Adrenal gland (tissue), 19 donors: ENCODE measurements at regions of chr11 and their contacts with region 1.

Region 1: DNA sequence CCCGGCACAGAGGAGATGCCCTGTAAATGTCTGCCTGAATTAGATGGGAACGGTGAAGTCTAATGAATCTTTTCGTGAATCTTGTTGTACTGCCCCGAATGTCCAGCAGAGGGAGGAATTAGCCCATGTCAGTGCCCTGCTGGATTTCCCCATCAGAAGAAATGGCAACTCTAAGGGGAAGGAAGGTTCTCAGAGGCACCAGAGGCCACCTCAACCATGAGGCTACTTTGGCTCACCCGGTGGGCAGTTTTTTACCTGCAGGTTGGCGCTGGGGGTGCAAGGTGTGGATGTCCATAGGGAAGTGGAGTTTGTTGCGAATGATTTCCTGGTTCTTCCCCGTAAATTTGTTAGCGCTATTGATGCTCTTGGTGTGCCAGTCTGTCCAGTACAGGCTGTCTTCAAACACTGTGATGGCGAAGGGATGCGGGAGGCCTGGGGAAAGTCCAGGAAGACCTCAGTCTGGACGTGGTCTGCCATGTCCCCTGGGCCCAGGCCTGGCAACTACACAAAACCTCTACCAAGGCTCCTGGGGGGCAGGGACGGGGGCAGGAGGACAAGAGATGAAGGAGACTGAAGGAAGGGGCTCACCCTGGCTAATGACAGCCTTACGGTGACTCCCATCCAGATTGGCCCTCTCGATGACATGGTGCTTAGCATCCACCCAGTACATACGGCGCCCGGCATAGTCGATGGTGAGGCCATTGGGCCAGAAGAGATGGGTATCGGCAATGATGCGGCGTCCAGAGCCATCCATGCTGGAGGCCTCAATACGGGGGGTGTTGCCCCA is 28.5 kb downstream of the LRP4 start:
- DNase-seq: peak; percentile 66 to 92 (median 80)
- H3K4me3 ChIP-seq: no peak overlapping the region
- H3K27ac ChIP-seq: no peak overlapping the region
- H3K4me1 ChIP-seq: no peaks in the 10 kb centered on the region
- H3K27me3 ChIP-seq: no peaks in the 10 kb centered on the region
- CTCF ChIP-seq: peak; percentile 81 to 96 (median 94)
- POLR2A ChIP-seq: no peak

Region 2: DNA sequence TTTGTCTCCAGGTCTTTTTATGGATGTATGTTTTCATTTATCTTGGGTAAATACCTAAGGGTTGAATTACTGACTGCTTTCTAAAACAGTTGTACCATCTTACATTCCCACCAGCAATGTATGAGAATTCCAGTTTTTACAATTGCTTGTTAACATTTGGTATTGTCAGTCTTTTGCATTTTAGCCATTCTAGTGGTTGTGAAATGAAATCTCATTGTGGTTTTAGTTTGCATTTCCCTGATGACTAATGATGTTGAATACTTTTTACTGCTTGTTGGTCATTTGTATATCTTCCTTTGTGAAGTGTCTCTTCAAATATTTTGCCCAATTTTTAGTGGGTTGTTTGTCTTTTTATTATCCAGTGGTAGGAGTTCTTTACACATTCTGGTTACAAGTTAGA is 194.0 kb after region 1 on chr11:
- intact Hi-C with region 1: no loop called
- DNase-seq: no peak
- H3K4me3 ChIP-seq: no peak overlapping the region
- H3K27ac ChIP-seq: no peak overlapping the region
- H3K4me1 ChIP-seq: no peaks in the 10 kb centered on the region
- H3K27me3 ChIP-seq: no peaks in the 10 kb centered on the region
- CTCF ChIP-seq: no peak
- POLR2A ChIP-seq: no peak

Region 3: GRCh38 chr11:47152953-47153950 is 263.4 kb after region 1 on chr11:
- intact Hi-C with region 1: loop called (anchors 2 to 5 kb)
- DNase-seq: peak; percentile 75 to 95 (median 83)
- H3K4me3 ChIP-seq: no peak overlapping the region
- H3K27ac ChIP-seq: no peak overlapping the region
- H3K4me1 ChIP-seq: peaks cover 0 to 14% of the 10 kb centered on the region in 2 donors
- H3K27me3 ChIP-seq: no peaks in the 10 kb centered on the region
- CTCF ChIP-seq: peak; percentile 91 to 99 (median 96)
- POLR2A ChIP-seq: no peak

Region 4: DNA sequence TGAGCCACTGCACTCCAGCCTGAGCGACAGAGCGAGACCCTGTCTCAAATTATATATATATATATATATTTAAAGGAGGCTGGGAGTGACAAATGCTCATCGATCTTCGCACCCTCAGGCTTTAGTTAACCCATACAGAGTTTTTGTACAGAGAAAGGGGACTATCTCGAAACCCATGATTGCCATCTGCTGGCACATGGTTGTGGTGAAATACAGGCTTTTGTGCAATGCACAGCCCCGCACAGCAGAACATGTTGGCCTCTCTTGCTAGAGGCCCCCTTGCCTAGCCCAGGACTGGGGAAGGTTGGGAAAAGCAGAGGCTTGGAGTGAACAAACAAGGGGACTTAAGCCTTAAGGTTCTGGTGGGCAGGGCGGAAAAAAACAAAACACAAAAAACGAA is 459.0 kb after region 1 on chr11:
- intact Hi-C with region 1: loop called in 1 of 2 experiments (anchors 10 kb)
- DNase-seq: peak in 3 of 7 donors; percentile 39 to 65 (median 44)
- H3K4me3 ChIP-seq: no peak overlapping the region
- H3K27ac ChIP-seq: no peak overlapping the region
- H3K4me1 ChIP-seq: peaks cover 14 to 16% of the 10 kb centered on the region in 2 donors
- H3K27me3 ChIP-seq: no peaks in the 10 kb centered on the region
- CTCF ChIP-seq: peak in 4 of 6 experiments; percentile 12 to 31 (median 16)
- POLR2A ChIP-seq: no peak